Transverse colon (tissue), 4 donors: ENCODE measurements at regions of chr10 and their contacts with region 1.

Region 1: DNA sequence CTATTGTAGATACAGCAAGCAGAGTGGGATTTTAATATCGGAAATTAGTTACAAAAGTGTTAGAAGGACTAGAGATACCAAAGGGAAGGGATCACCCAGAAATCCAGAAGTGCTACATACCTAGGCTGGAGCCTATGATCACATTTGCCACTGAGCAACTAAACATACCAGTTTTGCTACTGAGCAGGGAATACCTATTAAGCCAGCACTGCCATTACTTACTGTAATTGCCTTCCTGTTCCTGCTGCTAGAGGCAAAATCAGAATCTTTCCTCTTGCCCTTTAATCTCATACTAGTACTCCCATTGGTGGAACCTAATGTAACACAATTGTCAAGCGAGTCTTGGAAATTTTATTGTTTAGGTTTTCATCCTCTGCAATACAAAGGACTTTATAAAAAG is 121.7 kb downstream of the ATRNL1 start:
- DNase-seq: no peak
- H3K4me3 ChIP-seq: no peak overlapping the region
- H3K27ac ChIP-seq: no peak overlapping the region
- H3K4me1 ChIP-seq: no peaks in the 10 kb centered on the region
- H3K27me3 ChIP-seq: no peaks in the 10 kb centered on the region
- CTCF ChIP-seq: no peak
- EP300 ChIP-seq: no peak
- POLR2A ChIP-seq: no peak

Region 2: GRCh38 chr10:114349596-114350191 is 865.1 kb before region 1 on chr10:
- in situ Hi-C with region 1: no loop called
- intact Hi-C with region 1: loop called (anchors 5 kb)
- DNase-seq: peak; percentile 12
- H3K4me3 ChIP-seq: no peak overlapping the region
- H3K27ac ChIP-seq: peak overlapping the region; percentile 55 to 68 (median 61)
- H3K4me1 ChIP-seq: peaks cover 3 to 19% (median 6%) of the 10 kb centered on the region in 4 donors
- H3K27me3 ChIP-seq: no peaks in the 10 kb centered on the region
- CTCF ChIP-seq: no peak
- EP300 ChIP-seq: no peak
- POLR2A ChIP-seq: no peak

Region 3: GRCh38 chr10:114937962-114938855 is 276.6 kb before region 1 on chr10 and contains the start of gene TRUB1:
- in situ Hi-C with region 1: no loop called
- intact Hi-C with region 1: no loop called
- DNase-seq: peak; percentile 95
- H3K4me3 ChIP-seq: peak within 1 kb of the TSS; percentile 70 to 96 (median 92)
- H3K27ac ChIP-seq: peak within 1 kb of the TSS; percentile 86 to 91 (median 88)
- H3K4me1 ChIP-seq: peaks cover 7 to 21% (median 9%) of the 10 kb centered on the region in 4 donors
- H3K27me3 ChIP-seq: no peaks in the 10 kb centered on the region
- CTCF ChIP-seq: no peak
- EP300 ChIP-seq: no peak
- POLR2A ChIP-seq: peak; percentile 59
- total RNA-seq, gene TRUB1: 14.6 to 40.0 (median 21.1) TPM

Region 4: GRCh38 chr10:115103700-115104099 is 111.1 kb before region 1 on chr10:
- in situ Hi-C with region 1: no loop called
- intact Hi-C with region 1: no loop called
- DNase-seq: no peak
- H3K4me3 ChIP-seq: no peak overlapping the region
- H3K27ac ChIP-seq: no peak overlapping the region
- H3K4me1 ChIP-seq: no peaks in the 10 kb centered on the region
- H3K27me3 ChIP-seq: no peaks in the 10 kb centered on the region
- CTCF ChIP-seq: no peak
- EP300 ChIP-seq: no peak
- POLR2A ChIP-seq: no peak

Region 5: DNA sequence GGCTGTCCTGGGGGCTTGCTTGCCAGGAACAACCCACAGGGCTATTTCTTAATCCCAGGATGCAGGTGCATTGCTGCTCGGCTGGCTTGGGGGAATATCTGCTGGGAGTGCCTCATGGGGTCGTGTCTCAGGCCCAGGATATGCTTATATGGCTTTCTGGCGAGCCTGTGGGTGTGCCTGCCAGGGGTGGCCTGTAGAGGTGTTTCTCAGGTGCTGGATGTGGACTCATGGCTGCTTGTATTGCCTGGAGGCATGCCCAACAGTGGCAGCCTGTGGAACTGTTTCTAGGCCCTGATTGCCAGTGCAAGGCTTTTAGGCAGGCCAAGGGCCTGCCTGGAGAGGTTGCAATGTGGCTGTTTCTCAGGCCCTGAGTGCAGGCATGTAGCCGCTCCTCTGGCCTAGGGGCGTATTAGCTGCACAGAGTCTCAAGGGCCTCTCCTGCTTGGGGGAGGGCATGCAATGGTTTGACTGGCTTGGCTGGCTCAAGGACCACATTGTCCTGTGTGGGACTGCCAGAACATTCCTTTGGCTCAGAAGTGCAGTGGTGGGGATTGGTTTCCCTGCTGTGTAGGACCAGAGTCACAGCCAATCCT is 80.5 kb after region 1 on chr10:
- in situ Hi-C with region 1: no loop called
- intact Hi-C with region 1: loop called (anchors 2 kb)
- DNase-seq: no peak
- H3K4me3 ChIP-seq: no peak overlapping the region
- H3K27ac ChIP-seq: no peak overlapping the region
- H3K4me1 ChIP-seq: no peaks in the 10 kb centered on the region
- H3K27me3 ChIP-seq: no peaks in the 10 kb centered on the region
- CTCF ChIP-seq: no peak
- EP300 ChIP-seq: no peak
- POLR2A ChIP-seq: no peak